IMR-90 (cell line): ENCODE measurements at regions of chr11 and their contacts with region 1.

Region 1: DNA sequence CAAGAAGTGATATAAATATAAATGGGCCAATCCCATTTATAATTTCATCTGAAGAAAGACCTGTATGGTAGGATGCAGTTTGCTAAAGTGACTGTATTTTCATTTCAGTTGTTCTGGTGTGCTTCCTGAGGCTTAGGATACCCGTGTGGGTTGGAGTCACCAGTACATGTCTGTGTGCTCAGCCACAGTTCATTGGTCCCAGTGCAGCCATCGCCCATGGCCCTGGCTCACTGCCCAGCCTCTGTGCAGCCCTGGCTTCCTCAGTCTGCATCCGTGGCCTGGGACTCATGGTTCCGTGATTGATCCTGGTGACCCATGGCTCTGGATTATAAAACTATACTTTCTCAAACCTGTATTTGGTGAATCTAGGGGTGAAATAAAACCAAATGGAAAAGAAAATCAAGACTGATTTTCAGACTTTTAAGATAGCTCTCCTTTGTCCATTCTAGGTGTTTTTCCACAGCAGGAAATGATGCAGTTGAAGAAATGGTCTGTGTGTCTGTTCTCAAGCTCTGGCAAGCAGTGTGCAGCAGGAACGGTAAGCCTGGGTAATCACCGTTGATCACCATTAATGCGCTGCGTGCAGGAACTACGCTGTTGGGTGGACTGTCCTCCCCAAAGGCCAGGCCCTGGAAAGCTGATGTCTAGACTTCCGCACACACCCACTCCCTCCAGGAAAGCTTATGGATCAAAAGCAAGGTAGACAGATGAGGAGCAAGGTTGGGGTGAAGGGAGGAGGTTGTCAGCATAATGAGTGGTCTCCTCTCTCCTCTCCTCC is 27.2 kb downstream of the TTC12 start:
- DNase-seq: no peak
- ATAC-seq: no peak
- H3K4me3 ChIP-seq: no peak overlapping the region
- H3K27ac ChIP-seq: no peak overlapping the region
- H3K4me1 ChIP-seq: peaks cover 16% of the 10 kb centered on the region
- H3K27me3 ChIP-seq: no peaks in the 10 kb centered on the region
- CTCF ChIP-seq: no peak
- POLR2A ChIP-seq: no peak
- RAD21 ChIP-seq: no peak

Region 2: GRCh38 chr11:113314389-113315301 is 26.9 kb before region 1 on chr11 and contains the start of gene TTC12:
- CTCF ChIA-PET with region 1: no interaction called
- POLR2A ChIA-PET with region 1: no interaction called
- dilution Hi-C with region 1: no loop called
- in situ Hi-C with region 1: no loop called
- intact Hi-C with region 1: loop called (anchors 2 kb)
- DNase-seq: peak; percentile 78
- ATAC-seq: peak; percentile 100
- H3K4me3 ChIP-seq: peak within 1 kb of the TSS; percentile 86
- H3K27ac ChIP-seq: peak within 1 kb of the TSS; percentile 79
- H3K4me1 ChIP-seq: no peaks in the 10 kb centered on the region; the same call in none of the 2 replicates
- H3K27me3 ChIP-seq: no peaks in the 10 kb centered on the region
- CTCF ChIP-seq: no peak
- POLR2A ChIP-seq: peak; percentile 48
- RAD21 ChIP-seq: no peak
- total RNA-seq, gene TTC12: 14.4 and 14.7 TPM in 2 replicates

Region 3: DNA sequence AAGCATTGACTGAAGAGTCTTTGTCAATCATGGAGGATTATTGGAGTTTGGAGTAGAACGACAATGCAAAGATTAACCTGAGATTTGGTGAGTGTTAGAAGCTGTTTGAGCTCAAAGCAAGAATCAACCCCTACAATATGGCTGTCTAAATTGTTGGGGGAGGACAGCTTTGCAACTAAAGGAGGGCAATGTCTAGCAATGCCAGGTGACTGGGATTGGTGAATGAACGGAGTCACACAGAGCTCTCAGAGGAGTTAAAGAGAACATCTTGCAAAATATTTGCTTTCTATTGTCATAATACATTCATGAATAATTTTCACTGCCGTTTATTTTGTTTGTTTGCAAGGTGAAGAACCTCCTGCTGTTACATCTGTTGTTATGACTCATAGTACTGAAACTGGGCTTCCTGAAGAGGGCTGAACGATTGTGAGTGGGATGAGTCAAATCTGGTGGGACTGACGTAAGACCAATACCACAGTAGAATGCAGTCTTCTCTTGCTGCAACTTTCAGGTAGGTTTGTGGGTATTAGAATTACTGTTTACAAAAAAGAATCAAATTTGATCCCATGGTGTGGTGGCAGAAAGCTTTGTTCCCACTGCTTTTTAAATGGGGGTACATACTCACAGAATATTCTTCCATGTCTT is 1880.8 kb after region 1 on chr11:
- CTCF ChIA-PET with region 1: no interaction called
- POLR2A ChIA-PET with region 1: no interaction called
- dilution Hi-C with region 1: no loop called
- in situ Hi-C with region 1: no loop called
- intact Hi-C with region 1: no loop called
- DNase-seq: peak; percentile 98
- ATAC-seq: peak; percentile 46
- H3K4me3 ChIP-seq: no peak overlapping the region
- H3K27ac ChIP-seq: no peak overlapping the region
- H3K4me1 ChIP-seq: peaks cover 4% of the 10 kb centered on the region
- H3K27me3 ChIP-seq: no peaks in the 10 kb centered on the region
- CTCF ChIP-seq: no peak
- POLR2A ChIP-seq: no peak
- RAD21 ChIP-seq: no peak